ENCODE measurements at regions of chr16 and their contacts with region 1.

Region 1: GRCh38 chr16:24645739-24646645 is 83.5 kb upstream of the TNRC6A start:
- DNase-seq: peak; percentile 67
- H3K4me3 ChIP-seq: no peak overlapping the region
- H3K27ac ChIP-seq: peak overlapping the region; percentile 32 to 70 (median 64)
- H3K4me1 ChIP-seq: peaks cover 0 to 9% (median 2%) of the 10 kb centered on the region in 4 donors
- H3K27me3 ChIP-seq: no peaks in the 10 kb centered on the region
- CTCF ChIP-seq: no peak
- EP300 ChIP-seq: peak in 2 of 4 donors; percentile 66 to 89
- POLR2A ChIP-seq: no peak

Region 2: DNA sequence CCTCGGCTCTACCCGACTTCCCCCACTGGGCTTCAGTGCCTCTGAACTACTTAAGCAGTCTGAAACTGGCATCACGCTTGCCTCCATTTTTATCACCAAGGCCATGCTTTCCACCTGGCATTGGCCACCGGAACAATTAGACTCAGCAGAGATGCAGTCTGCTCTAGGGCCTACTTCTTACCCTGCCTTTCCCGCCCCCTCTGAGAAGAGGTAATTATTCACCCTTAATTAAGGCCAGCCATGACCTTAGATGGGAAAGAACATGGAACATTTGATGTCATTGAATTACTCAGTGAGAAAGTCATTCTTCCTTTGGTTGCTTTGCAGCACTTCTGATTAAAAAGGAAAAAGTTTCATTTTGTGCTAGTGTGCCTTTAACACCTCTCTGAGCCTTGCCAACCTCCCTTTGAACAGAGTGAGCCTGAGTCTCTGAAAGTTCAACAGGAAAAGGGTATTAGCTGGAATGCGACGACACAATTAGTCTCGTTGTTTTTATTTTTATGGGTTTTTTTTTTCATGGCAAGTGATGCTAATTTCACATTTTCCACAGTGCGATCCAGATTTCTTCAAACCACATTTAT is 22.6 kb after region 1 on chr16:
- intact Hi-C with region 1: loop called (anchors 1 kb)
- DNase-seq: no peak
- H3K4me3 ChIP-seq: no peak overlapping the region
- H3K27ac ChIP-seq: peak overlapping the region; percentile 46 to 88 (median 77)
- H3K4me1 ChIP-seq: peaks cover 0 to 35% (median 34%) of the 10 kb centered on the region in 4 donors
- H3K27me3 ChIP-seq: no peaks in the 10 kb centered on the region
- CTCF ChIP-seq: no peak
- EP300 ChIP-seq: no peak
- POLR2A ChIP-seq: no peak

Region 3: GRCh38 chr16:24921229-24921628 is 275.2 kb after region 1 on chr16:
- intact Hi-C with region 1: no loop called
- DNase-seq: no peak
- H3K4me3 ChIP-seq: no peak overlapping the region
- H3K27ac ChIP-seq: no peak overlapping the region
- H3K4me1 ChIP-seq: no peaks in the 10 kb centered on the region
- H3K27me3 ChIP-seq: no peaks in the 10 kb centered on the region
- CTCF ChIP-seq: no peak
- EP300 ChIP-seq: no peak
- POLR2A ChIP-seq: no peak